Activated CD4-positive, alpha-beta memory T cell treated with anti-CD3 and anti-CD28 coated beads for 36 hours (primary cell): ENCODE measurements at regions of chr14 and their contacts with region 1.

Region 1: DNA sequence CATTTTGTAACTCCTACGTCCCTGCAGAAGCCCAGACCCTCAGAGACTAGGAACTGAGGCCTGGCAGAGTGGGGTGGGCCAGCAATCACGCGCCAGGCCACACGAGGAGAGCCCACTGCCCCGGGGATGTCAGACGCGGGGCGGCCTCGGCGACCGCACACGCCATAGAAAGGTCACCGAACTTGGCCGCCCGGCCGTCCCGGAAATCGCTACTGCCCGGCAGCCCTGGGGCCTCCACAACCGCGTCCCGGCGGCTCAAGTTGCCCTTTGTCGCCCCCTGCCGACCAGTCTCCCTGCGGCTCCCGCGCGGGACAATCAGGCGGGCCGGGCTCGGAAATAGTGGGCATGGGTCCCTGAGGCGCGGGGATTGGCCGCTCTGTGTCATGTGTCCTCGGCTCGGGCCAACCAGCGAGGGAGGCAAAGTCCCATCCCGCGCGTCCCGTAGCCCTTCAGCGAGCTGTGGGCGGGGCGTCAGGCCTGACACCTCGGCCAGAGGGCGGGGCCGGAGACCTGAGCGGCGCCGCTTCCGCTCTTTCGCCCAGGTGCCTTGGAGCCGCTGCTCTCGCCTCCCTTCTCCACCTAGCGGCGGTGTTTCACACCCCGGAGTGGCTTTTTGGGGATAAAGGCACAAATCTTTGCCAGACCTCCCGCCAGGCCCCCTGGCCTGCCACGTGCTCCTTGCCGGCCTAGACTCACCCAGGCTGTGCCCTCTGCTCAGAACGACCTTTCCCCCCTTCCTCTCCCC is 33.4 kb upstream of the DEGS2 start:
- DNase-seq: peak; percentile 100
- H3K4me3 Mint-ChIP-seq: peak overlapping the region; percentile 73
- H3K27ac Mint-ChIP-seq: peak overlapping the region; percentile 86
- H3K4me1 Mint-ChIP-seq: peaks cover 14% of the 10 kb centered on the region
- H3K27me3 Mint-ChIP-seq: no peaks in the 10 kb centered on the region

Region 2: GRCh38 chr14:99982537-99983250 is 210.2 kb before region 1 on chr14:
- CTCF ChIA-PET with region 1: interaction called, 72 read pairs
- POLR2A ChIA-PET with region 1: interaction called, 3 read pairs
- intact Hi-C with region 1: loop called (anchors 1 kb)
- DNase-seq: peak; percentile 73
- H3K4me3 Mint-ChIP-seq: no peak overlapping the region
- H3K27ac Mint-ChIP-seq: no peak overlapping the region
- H3K4me1 Mint-ChIP-seq: peaks cover 8% of the 10 kb centered on the region
- H3K27me3 Mint-ChIP-seq: no peaks in the 10 kb centered on the region

Region 3: DNA sequence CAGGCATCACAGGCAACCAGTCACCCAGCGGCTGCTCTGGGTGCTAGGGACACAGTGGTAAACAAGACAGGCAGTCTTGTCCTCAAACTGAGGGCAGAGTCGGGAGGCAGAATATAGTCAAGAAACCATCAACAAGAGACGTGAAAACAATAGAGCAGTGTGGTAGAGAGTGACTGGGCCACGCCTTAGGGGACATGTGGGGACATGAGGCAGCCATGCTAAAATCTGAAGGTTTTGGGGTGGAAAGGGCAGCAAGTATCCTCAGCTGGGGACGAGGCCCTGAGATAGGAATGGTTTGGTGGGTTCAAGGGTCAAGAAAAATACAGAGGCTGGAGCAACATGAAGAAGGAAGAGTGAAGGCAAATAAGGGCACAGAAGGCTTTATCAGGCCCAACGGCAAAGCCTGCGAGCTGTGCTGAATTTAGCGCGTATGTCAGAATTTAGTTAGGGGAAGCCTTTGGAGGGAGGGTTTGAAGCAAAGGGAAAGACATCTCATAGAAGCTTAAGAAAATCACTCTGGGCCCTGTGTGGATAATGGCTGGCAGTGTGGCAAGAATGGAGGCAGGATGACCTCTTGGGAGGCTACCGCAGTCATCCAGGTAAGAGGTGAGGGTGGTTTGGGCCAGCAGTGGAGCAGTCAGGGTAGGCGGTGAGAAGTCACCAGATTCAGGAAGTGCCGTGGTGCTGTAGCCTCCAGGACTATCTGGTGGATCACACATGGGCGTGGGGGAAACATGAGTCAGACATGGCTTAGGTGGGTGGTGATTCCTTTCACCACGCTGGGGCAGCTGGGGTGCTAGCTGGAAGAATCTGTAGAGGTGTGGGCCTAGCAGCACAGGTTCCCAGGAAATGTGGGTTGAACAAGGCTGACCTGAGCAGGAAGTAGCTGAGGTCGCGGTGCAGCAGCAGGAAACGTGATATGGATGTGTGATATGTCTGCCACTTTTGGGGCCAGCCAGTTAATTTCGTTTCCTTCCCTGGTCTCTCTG is 124.6 kb before region 1 on chr14:
- CTCF ChIA-PET with region 1: interaction called, 35 read pairs
- POLR2A ChIA-PET with region 1: interaction called, 8 read pairs
- intact Hi-C with region 1: loop called (anchors 1 kb)
- DNase-seq: peak; percentile 95
- H3K4me3 Mint-ChIP-seq: peak overlapping the region; percentile 81
- H3K27ac Mint-ChIP-seq: peak overlapping the region; percentile 98
- H3K4me1 Mint-ChIP-seq: peaks cover 81% of the 10 kb centered on the region
- H3K27me3 Mint-ChIP-seq: no peaks in the 10 kb centered on the region

Region 4: DNA sequence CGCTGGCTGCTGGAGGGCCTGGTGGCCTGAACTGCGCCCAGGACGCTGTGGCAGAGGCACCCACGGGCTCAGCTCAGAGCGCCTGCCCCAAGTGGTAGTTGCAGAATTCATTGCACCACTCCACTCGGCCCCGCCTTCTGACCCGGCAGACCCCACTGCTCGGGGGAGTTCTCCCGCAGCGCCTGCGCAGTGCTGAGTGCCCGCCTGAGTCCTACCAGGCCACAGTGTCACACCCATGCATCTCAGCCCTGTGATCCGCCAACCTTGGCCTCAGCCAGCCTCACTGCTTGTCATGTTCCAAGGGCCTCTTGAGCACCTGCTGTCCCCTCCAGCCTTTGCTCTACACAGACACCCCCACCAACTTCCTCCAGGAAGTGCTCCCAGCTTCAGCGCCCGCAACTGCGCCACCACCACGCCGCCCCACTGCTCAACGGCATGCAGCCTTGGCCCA is 45.6 kb before region 1 on chr14:
- CTCF ChIA-PET with region 1: interaction called, 3 read pairs
- POLR2A ChIA-PET with region 1: no interaction called
- intact Hi-C with region 1: loop called (anchors 2 kb)
- DNase-seq: peak; percentile 63
- H3K4me3 Mint-ChIP-seq: peak overlapping the region; percentile 28
- H3K27ac Mint-ChIP-seq: peak overlapping the region; percentile 45
- H3K4me1 Mint-ChIP-seq: peaks cover 11% of the 10 kb centered on the region
- H3K27me3 Mint-ChIP-seq: no peaks in the 10 kb centered on the region

Region 5: DNA sequence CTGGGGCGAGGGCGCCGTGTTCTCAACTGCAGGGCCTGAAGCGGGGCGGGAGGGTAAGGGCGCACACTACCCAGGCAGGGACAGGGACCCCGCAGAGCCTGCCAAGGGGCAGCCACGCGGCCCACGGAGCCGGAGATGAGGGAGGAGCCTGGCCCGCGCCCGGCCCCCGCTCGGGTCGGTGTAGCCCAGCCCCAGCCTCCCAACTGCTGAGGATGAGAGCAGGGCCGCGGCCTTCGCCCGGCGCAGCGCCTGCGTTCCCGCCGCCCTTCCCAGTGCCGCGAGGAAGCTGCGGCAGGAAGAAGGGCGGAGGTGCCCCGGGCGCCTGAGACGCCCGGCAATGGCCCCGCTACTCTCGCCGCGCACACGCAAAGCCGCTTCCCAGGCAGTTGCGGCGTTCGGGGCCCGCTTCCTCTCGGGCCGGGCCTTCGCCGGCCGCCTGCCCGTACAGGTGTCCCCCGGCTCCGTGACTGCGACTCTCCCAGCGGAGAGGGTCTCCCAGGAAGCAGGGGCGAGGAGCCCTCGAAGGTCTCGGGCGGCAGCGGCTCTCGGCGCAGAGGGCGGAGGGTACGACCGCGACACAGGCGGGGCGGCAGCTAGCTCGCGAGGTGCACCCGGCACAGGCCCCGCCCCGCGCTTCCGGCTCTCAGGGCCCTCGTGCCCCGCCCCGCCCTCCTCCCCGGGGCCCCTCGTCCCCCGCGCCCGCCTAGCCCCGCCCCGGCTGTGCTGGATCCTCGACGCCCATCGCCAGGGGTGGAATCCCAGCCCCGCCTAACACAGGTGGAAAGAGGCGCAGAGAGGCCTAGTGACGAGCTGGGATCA is 21.3 kb after region 1 on chr14:
- CTCF ChIA-PET with region 1: interaction called, 25 read pairs
- POLR2A ChIA-PET with region 1: interaction called, 5 read pairs
- intact Hi-C with region 1: loop called (anchors 1 kb)
- DNase-seq: peak; percentile 95
- H3K4me3 Mint-ChIP-seq: peak overlapping the region; percentile 75
- H3K27ac Mint-ChIP-seq: peak overlapping the region; percentile 89
- H3K4me1 Mint-ChIP-seq: peaks cover 26% of the 10 kb centered on the region
- H3K27me3 Mint-ChIP-seq: no peaks in the 10 kb centered on the region

Region 6: GRCh38 chr14:100239840-100240724 is 47.2 kb after region 1 on chr14:
- CTCF ChIA-PET with region 1: interaction called, 22 read pairs
- POLR2A ChIA-PET with region 1: interaction called, 3 read pairs
- intact Hi-C with region 1: loop called (anchors 2 kb)
- DNase-seq: peak; percentile 90
- H3K4me3 Mint-ChIP-seq: peak overlapping the region; percentile 81
- H3K27ac Mint-ChIP-seq: peak overlapping the region; percentile 89
- H3K4me1 Mint-ChIP-seq: peaks cover 54% of the 10 kb centered on the region
- H3K27me3 Mint-ChIP-seq: peaks cover 2% of the 10 kb centered on the region